CD8-positive, alpha-beta T cell (primary cell): ENCODE measurements at regions of chr16 and their contacts with region 1.

Region 1: GRCh38 chr16:3134564-3135417 is at the start of gene ZNF213:
- DNase-seq: peak; percentile 84 to 99 (median 92)
- ATAC-seq: peak; percentile 99
- H3K4me3 ChIP-seq: peak within 1 kb of the TSS; percentile 89 to 93
- H3K4me3 Mint-ChIP-seq: peak within 1 kb of the TSS; percentile 95
- H3K27ac ChIP-seq: peak within 1 kb of the TSS; percentile 94 to 95
- H3K27ac Mint-ChIP-seq: peak within 1 kb of the TSS; percentile 99
- H3K4me1 ChIP-seq: peaks cover 15% of the 10 kb centered on the region
- H3K4me1 Mint-ChIP-seq: peaks cover 29% of the 10 kb centered on the region
- H3K27me3 ChIP-seq: no peaks in the 10 kb centered on the region
- H3K27me3 Mint-ChIP-seq: no peaks in the 10 kb centered on the region
- CTCF ChIP-seq: peak; percentile 5
- total RNA-seq, gene ZNF213: 1.8 to 2.2 TPM

Region 2: DNA sequence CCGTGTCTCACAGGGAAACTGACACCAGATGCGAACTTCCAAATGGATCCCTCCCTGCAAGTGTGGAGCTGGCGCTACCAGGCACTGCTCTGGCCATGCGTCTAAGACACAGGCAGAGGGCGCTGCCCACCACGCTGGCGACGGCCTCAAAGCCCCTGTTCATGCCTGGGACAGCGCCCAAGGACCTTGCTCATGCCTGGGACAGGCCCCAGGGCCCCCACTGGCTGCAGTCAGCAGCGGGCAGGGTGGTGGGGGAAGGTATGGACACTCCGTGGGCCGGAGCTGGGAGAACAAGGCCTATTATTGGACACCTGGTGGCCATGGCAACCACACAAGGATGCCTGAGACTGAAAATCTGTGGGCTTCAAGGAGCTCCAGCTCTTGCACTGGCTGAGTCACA is 295.9 kb before region 1 on chr16:
- CTCF ChIA-PET with region 1: no interaction called
- POLR2A ChIA-PET with region 1: no interaction called
- intact Hi-C with region 1: no loop called
- DNase-seq: peak; percentile 34 to 80 (median 63)
- ATAC-seq: peak; percentile 76
- H3K4me3 ChIP-seq: no peak overlapping the region
- H3K4me3 Mint-ChIP-seq: no peak overlapping the region
- H3K27ac ChIP-seq: no peak overlapping the region
- H3K27ac Mint-ChIP-seq: peak overlapping the region; percentile 64
- H3K4me1 ChIP-seq: peaks cover 49% of the 10 kb centered on the region
- H3K4me1 Mint-ChIP-seq: peaks cover 35% of the 10 kb centered on the region
- H3K27me3 ChIP-seq: peaks cover 0 to 4% of the 10 kb centered on the region in 2 experiments
- H3K27me3 Mint-ChIP-seq: peaks cover 10% of the 10 kb centered on the region
- CTCF ChIP-seq: peak; percentile 63

Region 3: DNA sequence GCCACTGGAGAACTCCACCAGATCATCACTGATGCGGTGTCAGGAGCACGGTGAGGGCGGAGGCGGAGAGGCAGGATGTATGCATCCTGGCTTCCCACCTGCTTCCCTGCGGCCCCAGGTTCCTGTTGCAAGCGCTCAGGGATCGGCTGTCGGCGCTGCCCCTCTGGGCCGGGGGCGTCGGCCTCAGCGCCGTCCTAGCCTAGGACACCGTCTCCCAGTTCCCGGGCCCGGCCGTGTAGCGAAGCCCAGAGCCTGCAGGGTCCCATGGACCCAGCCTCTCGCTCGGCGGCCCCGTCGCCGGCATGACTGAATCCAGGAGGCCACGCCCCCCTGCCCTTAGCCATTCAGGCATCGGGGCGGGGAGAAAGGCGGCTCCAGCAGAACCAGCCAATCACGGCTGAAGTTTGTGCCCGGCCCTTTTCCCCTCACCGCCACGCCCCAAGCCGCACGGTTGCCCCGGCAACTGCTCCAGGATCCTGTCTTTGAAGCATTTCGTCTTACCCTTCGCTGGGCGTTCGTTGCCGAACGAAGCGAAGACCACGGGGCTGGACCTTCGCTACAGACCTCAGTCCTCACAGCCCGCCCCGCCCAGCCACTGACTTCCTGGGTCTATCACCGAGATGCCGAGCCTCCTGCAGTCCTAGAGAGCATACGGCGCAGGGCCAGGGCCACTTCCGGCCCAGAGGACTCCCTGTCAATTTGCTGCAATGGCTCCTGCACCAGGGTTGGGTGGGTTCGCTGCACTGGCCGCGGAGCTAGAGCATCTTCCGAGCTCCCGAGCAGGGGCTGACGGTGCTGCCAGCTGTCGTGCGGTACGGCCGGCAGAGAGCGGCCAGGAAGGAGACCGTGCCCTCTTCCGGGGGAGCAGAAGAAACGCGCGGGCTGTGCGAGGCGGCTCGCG is 10.6 kb before region 1 on chr16:
- CTCF ChIA-PET with region 1: interaction called, 38 read pairs
- POLR2A ChIA-PET with region 1: interaction called, 14 read pairs
- intact Hi-C with region 1: loop called (anchors 1 kb)
- DNase-seq: peak; percentile 88 to 98 (median 97)
- ATAC-seq: peak; percentile 90
- H3K4me3 ChIP-seq: peak overlapping the region; percentile 72 to 89
- H3K4me3 Mint-ChIP-seq: peak overlapping the region; percentile 98
- H3K27ac ChIP-seq: peak overlapping the region; percentile 44 to 72
- H3K27ac Mint-ChIP-seq: peak overlapping the region; percentile 95
- H3K4me1 ChIP-seq: peaks cover 30% of the 10 kb centered on the region
- H3K4me1 Mint-ChIP-seq: peaks cover 45% of the 10 kb centered on the region
- H3K27me3 ChIP-seq: no peaks in the 10 kb centered on the region
- H3K27me3 Mint-ChIP-seq: no peaks in the 10 kb centered on the region
- CTCF ChIP-seq: no peak

Region 4: DNA sequence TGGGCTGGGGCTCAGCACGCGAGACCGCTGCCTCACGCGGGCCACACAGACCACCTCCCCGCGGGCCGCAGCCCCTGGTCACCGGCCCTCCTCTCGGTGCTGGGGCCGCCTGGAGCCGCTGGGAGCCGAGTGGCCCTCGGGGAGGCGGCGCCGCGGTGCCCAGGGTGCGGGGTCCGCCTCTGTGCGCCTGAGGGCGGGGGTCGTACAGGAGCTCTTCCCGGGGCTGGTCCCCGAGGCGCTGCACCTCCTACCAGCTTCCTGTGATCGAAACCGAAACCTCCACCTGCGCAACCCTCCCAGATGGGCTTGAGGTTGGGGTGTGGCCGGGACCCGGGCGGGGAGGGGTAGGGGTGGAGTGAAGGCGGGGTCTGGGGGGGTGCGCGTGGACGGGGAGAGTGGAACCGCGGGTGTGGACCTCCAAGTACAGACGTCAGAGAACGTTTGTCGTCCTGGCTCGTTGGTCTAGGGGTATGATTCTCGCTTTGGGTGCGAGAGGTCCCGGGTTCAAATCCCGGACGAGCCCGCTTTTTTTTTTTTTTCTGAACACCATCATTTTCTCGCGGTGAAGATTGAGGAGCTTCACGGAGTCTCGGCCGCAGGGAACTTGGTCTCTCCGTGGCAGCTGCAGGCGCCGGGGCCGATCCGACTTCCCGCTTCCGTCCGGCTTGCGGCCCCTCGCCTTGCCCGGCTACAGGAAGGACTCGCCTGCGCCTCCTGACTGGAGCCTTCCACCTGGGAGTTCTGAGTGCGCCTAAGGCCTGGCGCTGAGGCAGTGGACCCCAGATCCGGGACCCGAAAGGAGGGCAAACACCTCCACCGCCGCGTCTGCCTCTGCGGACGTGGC is 23.9 kb after region 1 on chr16:
- CTCF ChIA-PET with region 1: interaction called, 15 read pairs
- POLR2A ChIA-PET with region 1: interaction called, 7 read pairs
- intact Hi-C with region 1: loop called (anchors 2 kb)
- DNase-seq: peak; percentile 91 to 98 (median 95)
- ATAC-seq: peak; percentile 91
- H3K4me3 ChIP-seq: peak overlapping the region; percentile 80 to 97
- H3K4me3 Mint-ChIP-seq: peak overlapping the region; percentile 90
- H3K27ac ChIP-seq: peak overlapping the region; percentile 70 to 78
- H3K27ac Mint-ChIP-seq: peak overlapping the region; percentile 94
- H3K4me1 ChIP-seq: peaks cover 23% of the 10 kb centered on the region
- H3K4me1 Mint-ChIP-seq: peaks cover 15% of the 10 kb centered on the region
- H3K27me3 ChIP-seq: no peaks in the 10 kb centered on the region
- H3K27me3 Mint-ChIP-seq: no peaks in the 10 kb centered on the region
- CTCF ChIP-seq: no peak

Region 5: GRCh38 chr16:3374385-3374784 is 239.6 kb after region 1 on chr16:
- CTCF ChIA-PET with region 1: no interaction called
- POLR2A ChIA-PET with region 1: no interaction called
- intact Hi-C with region 1: no loop called
- DNase-seq: no peak
- ATAC-seq: no peak
- H3K4me3 ChIP-seq: no peak overlapping the region
- H3K4me3 Mint-ChIP-seq: no peak overlapping the region
- H3K27ac ChIP-seq: no peak overlapping the region
- H3K27ac Mint-ChIP-seq: no peak overlapping the region
- H3K4me1 ChIP-seq: no peaks in the 10 kb centered on the region
- H3K4me1 Mint-ChIP-seq: no peaks in the 10 kb centered on the region
- H3K27me3 ChIP-seq: no peaks in the 10 kb centered on the region
- H3K27me3 Mint-ChIP-seq: no peaks in the 10 kb centered on the region
- CTCF ChIP-seq: no peak